PC-9 (cell line): ENCODE measurements at regions of chr14 and their contacts with region 1.

Region 1: DNA sequence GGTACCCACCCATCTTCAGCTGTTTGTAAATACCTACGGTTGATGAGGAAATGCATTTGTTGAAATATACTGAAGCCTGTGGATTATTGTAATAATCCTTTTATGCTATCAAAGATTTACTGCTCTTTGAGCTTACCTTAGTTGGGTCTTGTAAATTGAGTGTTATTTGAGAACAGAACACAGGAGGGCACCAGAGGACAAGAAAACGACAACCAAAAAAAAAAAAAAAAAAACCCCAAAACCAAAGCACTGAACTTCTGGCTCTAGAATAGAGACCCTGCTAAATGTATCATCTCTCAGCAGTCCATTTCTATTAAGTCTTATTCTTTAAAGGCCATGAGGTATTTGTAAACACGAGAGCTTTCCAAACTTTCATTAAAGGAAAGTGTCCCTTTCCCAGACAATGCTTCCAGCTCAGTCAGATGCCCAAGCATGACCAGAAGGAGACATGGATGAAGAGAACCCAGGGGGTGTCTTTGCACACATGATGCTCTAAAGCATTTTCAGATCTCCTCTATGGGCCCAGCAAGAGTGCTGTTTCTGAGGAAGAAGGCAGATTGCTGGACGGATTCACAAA is 763.9 kb downstream of the NRXN3 start:
- DNase-seq: peak in 1 of 2 experiments; percentile 8
- H3K4me3 ChIP-seq: no peak overlapping the region
- H3K27ac ChIP-seq: no peak overlapping the region
- H3K4me1 ChIP-seq: no peaks in the 10 kb centered on the region
- H3K27me3 ChIP-seq: no peaks in the 10 kb centered on the region
- CTCF ChIP-seq: peak; percentile 85

Region 2: GRCh38 chr14:78875049-78875448 is 59.0 kb before region 1 on chr14:
- CTCF ChIA-PET with region 1: interaction called, 17 read pairs
- POLR2A ChIA-PET with region 1: no interaction called
- intact Hi-C with region 1: no loop called
- DNase-seq: no peak
- H3K4me3 ChIP-seq: no peak overlapping the region
- H3K27ac ChIP-seq: no peak overlapping the region
- H3K4me1 ChIP-seq: no peaks in the 10 kb centered on the region
- H3K27me3 ChIP-seq: peaks cover 47% of the 10 kb centered on the region
- CTCF ChIP-seq: no peak

Region 3: GRCh38 chr14:78947681-78948080 is 13.6 kb after region 1 on chr14:
- CTCF ChIA-PET with region 1: interaction called, 10 read pairs
- POLR2A ChIA-PET with region 1: interaction called, 4 read pairs
- intact Hi-C with region 1: no loop called
- DNase-seq: no peak
- H3K4me3 ChIP-seq: no peak overlapping the region
- H3K27ac ChIP-seq: no peak overlapping the region
- H3K4me1 ChIP-seq: peaks cover 8% of the 10 kb centered on the region
- H3K27me3 ChIP-seq: peaks cover 11% of the 10 kb centered on the region; the same call in 1 of the 2 replicates
- CTCF ChIP-seq: no peak

Region 4: GRCh38 chr14:78967110-78967809 is 33.2 kb after region 1 on chr14:
- CTCF ChIA-PET with region 1: interaction called, 10 read pairs
- POLR2A ChIA-PET with region 1: interaction called, 19 read pairs
- intact Hi-C with region 1: no loop called
- DNase-seq: no peak
- H3K4me3 ChIP-seq: no peak overlapping the region
- H3K27ac ChIP-seq: no peak overlapping the region
- H3K4me1 ChIP-seq: no peaks in the 10 kb centered on the region
- H3K27me3 ChIP-seq: no peaks in the 10 kb centered on the region
- CTCF ChIP-seq: no peak

Region 5: GRCh38 chr14:78997811-78998210 is 63.8 kb after region 1 on chr14:
- CTCF ChIA-PET with region 1: interaction called, 10 read pairs
- POLR2A ChIA-PET with region 1: no interaction called
- intact Hi-C with region 1: no loop called
- DNase-seq: no peak
- H3K4me3 ChIP-seq: no peak overlapping the region
- H3K27ac ChIP-seq: no peak overlapping the region
- H3K4me1 ChIP-seq: no peaks in the 10 kb centered on the region
- H3K27me3 ChIP-seq: no peaks in the 10 kb centered on the region
- CTCF ChIP-seq: no peak

Region 6: GRCh38 chr14:79037593-79037992 is 103.6 kb after region 1 on chr14:
- CTCF ChIA-PET with region 1: no interaction called
- POLR2A ChIA-PET with region 1: no interaction called
- intact Hi-C with region 1: no loop called
- DNase-seq: no peak
- H3K4me3 ChIP-seq: no peak overlapping the region
- H3K27ac ChIP-seq: no peak overlapping the region
- H3K4me1 ChIP-seq: no peaks in the 10 kb centered on the region
- H3K27me3 ChIP-seq: peaks cover 12% of the 10 kb centered on the region; the same call in 1 of the 2 replicates
- CTCF ChIP-seq: no peak

Region 7: DNA sequence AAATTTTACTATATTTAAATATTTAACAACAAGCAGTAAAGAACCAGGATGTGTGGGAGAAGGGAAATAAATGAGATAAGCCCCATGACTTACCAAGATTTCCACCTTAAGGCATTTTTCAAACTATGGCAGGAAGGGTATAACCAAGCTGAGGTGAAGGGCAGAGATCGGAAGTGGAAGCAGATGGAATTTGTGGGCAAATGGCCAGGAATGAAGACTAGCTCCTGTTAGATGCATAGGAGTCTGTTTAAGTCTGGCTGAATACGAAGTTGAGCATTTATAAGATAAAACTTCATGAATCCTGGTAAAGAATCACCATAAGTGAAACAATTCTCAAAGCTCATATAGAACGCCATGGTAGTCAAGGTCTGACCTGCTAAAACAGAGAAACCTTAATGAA is 1113.7 kb after region 1 on chr14:
- CTCF ChIA-PET with region 1: no interaction called
- POLR2A ChIA-PET with region 1: no interaction called
- intact Hi-C with region 1: loop called (anchors 5 kb)
- DNase-seq: no peak
- H3K4me3 ChIP-seq: no peak overlapping the region
- H3K27ac ChIP-seq: no peak overlapping the region
- H3K4me1 ChIP-seq: no peaks in the 10 kb centered on the region
- H3K27me3 ChIP-seq: no peaks in the 10 kb centered on the region
- CTCF ChIP-seq: no peak

Region 8: GRCh38 chr14:80602946-80603345 is 1668.9 kb after region 1 on chr14:
- CTCF ChIA-PET with region 1: no interaction called
- POLR2A ChIA-PET with region 1: no interaction called
- intact Hi-C with region 1: no loop called
- DNase-seq: no peak
- H3K4me3 ChIP-seq: no peak overlapping the region
- H3K27ac ChIP-seq: no peak overlapping the region
- H3K4me1 ChIP-seq: no peaks in the 10 kb centered on the region
- H3K27me3 ChIP-seq: no peaks in the 10 kb centered on the region
- CTCF ChIP-seq: no peak